CD4-positive, alpha-beta T cell (primary cell): ENCODE measurements at regions of chr10 and their contacts with region 1.

Region 1: DNA sequence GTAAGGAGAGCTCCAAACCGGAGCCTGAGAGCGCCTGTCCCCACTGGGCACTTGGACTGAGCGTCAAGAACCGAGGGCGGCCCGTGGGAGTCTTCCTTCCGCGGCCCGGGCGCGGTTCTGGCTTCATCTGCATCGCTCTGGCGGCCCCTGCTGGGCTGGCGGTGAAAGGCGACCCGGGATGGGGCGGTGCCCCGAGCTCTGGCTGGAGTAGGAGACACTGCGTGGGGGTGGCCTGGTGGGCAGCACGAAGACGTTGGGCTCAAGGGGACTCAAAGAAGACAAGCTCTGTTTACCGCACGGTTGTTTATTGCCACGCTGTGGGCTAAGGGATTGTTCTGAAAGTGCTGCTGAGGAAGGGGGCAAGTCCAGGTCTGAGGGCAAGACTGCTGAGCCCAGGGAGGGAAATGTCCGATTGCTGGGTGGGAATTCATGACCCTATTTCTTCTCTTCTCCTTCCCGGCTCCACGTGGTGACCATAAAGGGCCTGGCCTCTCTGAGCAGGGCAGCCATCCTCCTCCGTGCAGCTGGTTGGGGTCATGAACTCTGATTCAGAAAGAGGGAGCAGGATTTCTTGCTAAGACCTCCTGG is 29.8 kb downstream of the PLAU start:
- DNase-seq: peak; percentile 71 to 90 (median 82)
- ATAC-seq: peak; percentile 100
- H3K4me3 ChIP-seq: peak overlapping the region; percentile 3
- H3K4me3 Mint-ChIP-seq: no peak overlapping the region
- H3K27ac ChIP-seq: no peak overlapping the region
- H3K27ac Mint-ChIP-seq: no peak overlapping the region
- H3K4me1 ChIP-seq: peaks cover 9% of the 10 kb centered on the region
- H3K4me1 Mint-ChIP-seq: peaks cover 8% of the 10 kb centered on the region
- H3K27me3 ChIP-seq: no peaks in the 10 kb centered on the region
- H3K27me3 Mint-ChIP-seq: no peaks in the 10 kb centered on the region
- CTCF ChIP-seq: peak; percentile 95

Region 2: GRCh38 chr10:73886085-73886529 is 54.6 kb before region 1 on chr10:
- CTCF ChIA-PET with region 1: interaction called, 62 read pairs
- POLR2A ChIA-PET with region 1: interaction called, 19 read pairs
- intact Hi-C with region 1: loop called (anchors 1 kb)
- DNase-seq: peak; percentile 47 to 86 (median 58)
- ATAC-seq: peak; percentile 97
- H3K4me3 ChIP-seq: no peak overlapping the region
- H3K4me3 Mint-ChIP-seq: no peak overlapping the region
- H3K27ac ChIP-seq: no peak overlapping the region
- H3K27ac Mint-ChIP-seq: no peak overlapping the region
- H3K4me1 ChIP-seq: peaks cover 7% of the 10 kb centered on the region
- H3K4me1 Mint-ChIP-seq: peaks cover 10% of the 10 kb centered on the region
- H3K27me3 ChIP-seq: no peaks in the 10 kb centered on the region
- H3K27me3 Mint-ChIP-seq: no peaks in the 10 kb centered on the region
- CTCF ChIP-seq: peak; percentile 89

Region 3: GRCh38 chr10:73920089-73920488 is 20.6 kb before region 1 on chr10:
- CTCF ChIA-PET with region 1: interaction called, 10 read pairs
- POLR2A ChIA-PET with region 1: no interaction called
- intact Hi-C with region 1: no loop called
- DNase-seq: peak in 3 of 14 experiments; percentile 17 to 39 (median 33)
- ATAC-seq: peak; percentile 30
- H3K4me3 ChIP-seq: no peak overlapping the region
- H3K4me3 Mint-ChIP-seq: peak overlapping the region; percentile 64
- H3K27ac ChIP-seq: no peak overlapping the region
- H3K27ac Mint-ChIP-seq: no peak overlapping the region
- H3K4me1 ChIP-seq: peaks cover 37% of the 10 kb centered on the region
- H3K4me1 Mint-ChIP-seq: peaks cover 28% of the 10 kb centered on the region
- H3K27me3 ChIP-seq: peaks cover 0 to 9% of the 10 kb centered on the region in 2 experiments
- H3K27me3 Mint-ChIP-seq: peaks cover 32% of the 10 kb centered on the region
- CTCF ChIP-seq: no peak

Region 4: DNA sequence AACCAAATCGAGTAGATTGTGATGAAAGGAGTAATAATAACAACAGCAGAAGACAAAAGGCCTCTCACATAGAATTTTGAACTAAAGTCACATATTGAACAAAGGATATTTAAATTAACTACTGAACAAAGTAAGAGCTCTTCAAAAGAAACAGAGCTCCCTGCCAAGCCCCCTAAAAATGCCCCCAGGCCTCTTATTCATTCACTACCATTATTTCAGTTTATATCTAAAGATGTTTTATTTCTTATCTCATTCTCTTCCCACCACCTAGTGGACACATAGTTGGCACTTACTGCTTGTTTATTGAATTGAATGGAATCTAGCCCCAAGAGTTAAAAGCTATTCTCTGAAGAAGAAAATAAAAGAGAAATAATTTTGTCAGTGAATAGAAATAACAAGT is 94.6 kb after region 1 on chr10:
- CTCF ChIA-PET with region 1: interaction called, 4 read pairs
- POLR2A ChIA-PET with region 1: interaction called, 3 read pairs
- intact Hi-C with region 1: loop called in 1 of 2 experiments (anchors 5 kb)
- DNase-seq: peak in 3 of 14 experiments; percentile 27 to 37 (median 27)
- ATAC-seq: no peak
- H3K4me3 ChIP-seq: no peak overlapping the region
- H3K4me3 Mint-ChIP-seq: no peak overlapping the region
- H3K27ac ChIP-seq: no peak overlapping the region
- H3K27ac Mint-ChIP-seq: peak overlapping the region; percentile 64
- H3K4me1 ChIP-seq: peaks cover 9% of the 10 kb centered on the region
- H3K4me1 Mint-ChIP-seq: peaks cover 52% of the 10 kb centered on the region
- H3K27me3 ChIP-seq: no peaks in the 10 kb centered on the region
- H3K27me3 Mint-ChIP-seq: no peaks in the 10 kb centered on the region
- CTCF ChIP-seq: peak; percentile 39